SK-MEL-5 (cell line): ENCODE measurements at regions of chr9 and their contacts with region 1.

Region 1: GRCh38 chr9:112074250-112075008 is 100.7 kb downstream of the SUSD1 start:
- DNase-seq: peak; percentile 91

Region 2: DNA sequence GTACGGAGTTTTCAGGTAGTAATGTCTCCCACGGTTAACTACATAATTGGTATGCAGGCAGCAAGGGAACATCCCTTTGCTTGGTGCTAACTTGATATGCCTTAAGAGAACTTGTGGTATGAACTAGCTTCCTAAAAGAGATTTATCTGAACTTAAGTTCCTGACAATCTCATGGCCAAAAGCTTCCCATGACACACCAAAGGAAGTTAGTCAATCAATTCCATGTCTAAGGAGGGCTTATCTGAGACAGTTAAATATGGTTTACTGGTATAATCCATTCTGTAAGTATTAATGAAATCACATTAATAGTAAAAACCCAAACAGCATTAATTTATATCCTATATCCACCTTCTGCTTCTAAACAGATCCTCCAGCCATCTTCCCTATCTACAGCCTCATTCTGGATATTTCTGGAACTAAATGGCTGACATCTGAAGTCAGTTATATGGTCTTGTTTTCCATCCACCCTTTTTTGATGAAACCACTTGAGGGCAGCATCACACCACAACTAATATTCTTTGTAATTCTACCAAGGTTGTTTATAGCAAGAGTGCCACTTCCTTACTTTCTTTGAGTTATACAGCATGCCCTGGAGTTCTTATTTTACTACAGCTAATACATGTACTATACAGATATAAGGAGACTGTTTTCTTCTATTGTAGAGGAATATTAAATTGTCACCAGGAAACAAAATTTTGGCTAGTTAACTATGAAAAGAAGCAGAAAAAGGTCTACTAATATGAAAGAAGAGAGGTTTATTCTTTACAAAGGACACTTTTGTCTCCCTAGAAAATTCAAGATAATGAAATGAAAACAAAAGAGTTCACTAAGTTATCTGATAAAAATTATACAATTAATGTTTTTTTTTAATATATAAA is 314.4 kb before region 1 on chr9:
- in situ Hi-C with region 1: loop called (anchors 25 kb)
- DNase-seq: peak; percentile 94

Region 3: GRCh38 chr9:111851566-111851965 is 222.9 kb before region 1 on chr9:
- in situ Hi-C with region 1: no loop called
- DNase-seq: no peak

Region 4: GRCh38 chr9:111926421-111926875 is 148.0 kb before region 1 on chr9:
- in situ Hi-C with region 1: loop called (anchors 25 kb)
- DNase-seq: peak; percentile 82

Region 5: GRCh38 chr9:112218908-112219307 is 144.5 kb after region 1 on chr9:
- in situ Hi-C with region 1: no loop called
- DNase-seq: no peak